Breast epithelium (tissue), 4 donors: ENCODE measurements at regions of chr1 and their contacts with region 1.

Region 1: GRCh38 chr1:194809665-194810064 is 1623.3 kb upstream of the B3GALT2 start:
- DNase-seq: no peak
- H3K4me3 ChIP-seq: no peak overlapping the region
- H3K27ac ChIP-seq: no peak overlapping the region
- H3K4me1 ChIP-seq: no peaks in the 10 kb centered on the region
- H3K27me3 ChIP-seq: no peaks in the 10 kb centered on the region
- CTCF ChIP-seq: no peak
- POLR2A ChIP-seq: no peak

Region 2: GRCh38 chr1:194830387-194830786 is 20.7 kb after region 1 on chr1:
- intact Hi-C with region 1: loop called (anchors 2 kb)
- DNase-seq: no peak
- H3K4me3 ChIP-seq: no peak overlapping the region
- H3K27ac ChIP-seq: no peak overlapping the region
- H3K4me1 ChIP-seq: no peaks in the 10 kb centered on the region
- H3K27me3 ChIP-seq: no peaks in the 10 kb centered on the region
- CTCF ChIP-seq: no peak
- POLR2A ChIP-seq: no peak